ENCODE measurements at regions of chr10 and their contacts with region 1.

Region 1: DNA sequence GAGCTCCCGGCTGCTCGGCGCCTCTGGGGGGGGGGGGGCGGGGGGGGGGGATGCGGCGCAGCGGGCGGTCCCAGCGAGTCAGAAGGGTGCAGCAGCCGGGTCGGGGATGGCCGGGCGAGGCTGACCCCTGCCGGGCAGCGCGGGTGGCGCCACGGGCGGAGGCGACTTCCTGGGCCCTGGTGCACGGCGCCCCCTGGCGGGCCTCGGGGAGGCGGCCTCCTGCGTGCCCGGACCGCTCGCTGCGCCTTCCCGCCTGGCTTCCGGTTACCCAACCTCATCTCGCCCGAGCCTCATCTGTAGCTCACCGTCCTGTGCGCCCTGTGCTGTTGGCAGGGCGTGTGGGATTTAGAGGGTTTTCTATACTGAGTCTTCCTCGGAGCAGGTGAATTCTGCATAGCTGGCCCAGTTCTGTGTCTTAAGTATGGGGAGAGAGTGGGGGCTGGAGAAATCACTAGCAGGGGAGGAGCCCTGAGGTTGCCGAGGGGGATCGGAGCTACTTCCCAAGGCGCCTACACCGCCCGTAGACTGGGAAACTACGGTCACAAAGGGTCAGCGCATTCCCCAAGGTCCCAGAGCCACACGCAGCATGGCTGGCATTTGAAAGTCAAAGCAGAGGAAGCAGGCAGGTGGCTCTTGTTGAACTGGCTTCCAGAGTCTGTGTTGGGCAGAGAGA is 28.3 kb upstream of the WDFY4 start:
- DNase-seq: peak; percentile 97
- H3K4me3 Mint-ChIP-seq: peak overlapping the region; percentile 86
- H3K27ac Mint-ChIP-seq: peak overlapping the region; percentile 66
- H3K4me1 Mint-ChIP-seq: peaks cover 4% of the 10 kb centered on the region
- H3K27me3 Mint-ChIP-seq: peaks cover 36% of the 10 kb centered on the region

Region 2: GRCh38 chr10:48363617-48364355 is 292.6 kb before region 1 on chr10:
- intact Hi-C with region 1: loop called (anchors 1 kb)
- DNase-seq: peak; percentile 80
- H3K4me3 Mint-ChIP-seq: no peak overlapping the region
- H3K27ac Mint-ChIP-seq: no peak overlapping the region
- H3K4me1 Mint-ChIP-seq: peaks cover 4% of the 10 kb centered on the region
- H3K27me3 Mint-ChIP-seq: no peaks in the 10 kb centered on the region

Region 3: GRCh38 chr10:48577158-48577557 is 79.2 kb before region 1 on chr10:
- intact Hi-C with region 1: no loop called
- DNase-seq: no peak
- H3K4me3 Mint-ChIP-seq: no peak overlapping the region
- H3K27ac Mint-ChIP-seq: no peak overlapping the region
- H3K4me1 Mint-ChIP-seq: no peaks in the 10 kb centered on the region
- H3K27me3 Mint-ChIP-seq: peaks cover 14% of the 10 kb centered on the region

Region 4: DNA sequence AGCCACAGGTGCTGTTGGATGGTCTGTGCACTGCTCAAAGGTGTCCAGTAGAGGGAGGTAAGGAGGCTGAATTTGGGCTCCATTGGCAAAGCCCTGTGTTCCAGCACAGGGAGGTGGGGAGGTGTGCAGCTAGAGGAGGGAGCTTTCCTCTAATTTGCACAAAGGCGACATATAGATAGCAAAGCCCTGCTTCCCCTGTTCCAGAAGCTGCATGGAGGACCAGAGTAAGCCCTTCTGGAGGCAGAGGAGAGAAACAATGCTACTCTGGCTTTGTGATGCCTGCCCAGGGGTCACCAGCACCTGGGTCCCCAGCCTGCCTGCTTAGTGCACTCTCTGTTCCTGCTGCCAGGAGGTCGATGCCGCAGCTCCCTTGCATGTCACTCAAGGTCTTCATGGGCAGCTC is 48.1 kb before region 1 on chr10:
- intact Hi-C with region 1: loop called (anchors 5 kb)
- DNase-seq: peak; percentile 76
- H3K4me3 Mint-ChIP-seq: no peak overlapping the region
- H3K27ac Mint-ChIP-seq: no peak overlapping the region
- H3K4me1 Mint-ChIP-seq: no peaks in the 10 kb centered on the region
- H3K27me3 Mint-ChIP-seq: peaks cover 31% of the 10 kb centered on the region

Region 5: DNA sequence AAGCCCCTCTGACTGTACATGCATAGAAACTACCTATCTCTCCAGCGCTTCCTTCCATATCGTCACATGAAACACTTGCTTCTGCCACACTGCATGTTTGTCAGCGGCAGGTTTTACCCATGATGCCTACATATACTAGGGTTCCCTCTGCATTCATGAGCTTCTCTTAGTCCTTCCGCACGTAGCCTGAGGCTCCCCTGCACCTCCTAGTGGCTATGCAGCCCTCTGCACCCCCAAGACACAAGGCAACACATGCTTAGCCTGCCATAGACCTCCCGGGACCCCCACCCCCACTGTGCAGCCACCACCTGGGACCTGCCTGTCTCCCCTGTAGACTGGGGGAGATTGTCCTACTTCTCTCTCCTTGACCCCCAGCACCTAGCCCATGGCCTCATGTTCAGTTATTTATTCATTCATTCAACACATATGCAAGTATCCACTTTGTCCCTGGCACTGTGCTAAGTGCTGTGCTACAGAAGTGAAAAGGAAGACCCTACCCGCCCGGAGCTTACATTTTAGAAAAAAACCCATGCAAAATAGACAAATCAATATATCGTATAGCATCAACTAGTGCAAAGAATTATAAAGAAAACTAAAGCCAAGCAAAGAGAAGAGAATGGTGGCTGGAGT is 508.3 kb after region 1 on chr10:
- intact Hi-C with region 1: loop called (anchors 5 kb)
- DNase-seq: peak; percentile 84
- H3K4me3 Mint-ChIP-seq: no peak overlapping the region
- H3K27ac Mint-ChIP-seq: peak overlapping the region; percentile 12
- H3K4me1 Mint-ChIP-seq: peaks cover 25% of the 10 kb centered on the region
- H3K27me3 Mint-ChIP-seq: peaks cover 2% of the 10 kb centered on the region

Measured in activated CD4-positive, alpha-beta T cell treated with anti-CD3 and anti-CD28 coated beads, Interleukin-2, amount 10 ng/mL, durations not matched to agents 24 days and 14 days (primary cell).